CD8-positive, alpha-beta T cell (primary cell): ENCODE measurements at regions of chr2 and their contacts with region 1.

Region 1: GRCh38 chr2:30208452-30208851 is 22.9 kb upstream of the LBH start:
- DNase-seq: peak in 6 of 9 experiments; percentile 37 to 73 (median 55)
- ATAC-seq: peak; percentile 59
- H3K4me3 ChIP-seq: peak overlapping the region in 1 of 2 experiments; percentile 1
- H3K4me3 Mint-ChIP-seq: peak overlapping the region; percentile 59
- H3K27ac ChIP-seq: peak overlapping the region in 1 of 2 experiments; percentile 40
- H3K27ac Mint-ChIP-seq: peak overlapping the region; percentile 82
- H3K4me1 ChIP-seq: peaks cover 25% of the 10 kb centered on the region
- H3K4me1 Mint-ChIP-seq: peaks cover 26% of the 10 kb centered on the region
- H3K27me3 ChIP-seq: no peaks in the 10 kb centered on the region
- H3K27me3 Mint-ChIP-seq: no peaks in the 10 kb centered on the region
- CTCF ChIP-seq: peak; percentile 81

Region 2: DNA sequence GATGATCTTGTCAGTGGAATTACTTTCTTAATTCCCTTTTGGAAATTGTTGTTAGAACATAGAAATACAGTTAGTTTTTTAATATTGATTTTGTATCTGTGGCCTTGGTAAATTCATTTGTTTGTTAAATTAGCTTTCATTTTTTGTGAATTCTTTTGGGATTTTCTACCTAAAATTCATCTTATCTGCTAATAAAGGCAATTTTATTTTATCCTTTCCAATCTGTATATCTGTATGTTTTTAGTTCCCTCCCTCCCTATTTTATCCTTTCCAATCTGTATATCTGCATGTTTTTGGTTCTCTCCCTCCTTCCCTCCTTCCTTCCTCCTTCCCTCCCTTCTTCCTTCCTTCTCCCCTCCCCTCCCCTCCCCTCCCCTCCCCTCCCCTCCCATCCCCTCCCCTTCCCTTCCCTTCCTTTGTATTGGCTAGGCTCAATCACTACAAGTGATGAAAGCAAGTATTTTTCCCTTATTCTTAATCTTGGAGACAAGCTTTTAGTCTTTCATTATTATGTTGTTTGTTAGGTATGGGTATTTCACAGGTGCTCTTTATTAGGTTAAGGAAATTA is 531.5 kb before region 1 on chr2:
- CTCF ChIA-PET with region 1: no interaction called
- POLR2A ChIA-PET with region 1: no interaction called
- intact Hi-C with region 1: no loop called
- DNase-seq: no peak
- ATAC-seq: no peak
- H3K4me3 ChIP-seq: no peak overlapping the region
- H3K4me3 Mint-ChIP-seq: no peak overlapping the region
- H3K27ac ChIP-seq: no peak overlapping the region
- H3K27ac Mint-ChIP-seq: no peak overlapping the region
- H3K4me1 ChIP-seq: no peaks in the 10 kb centered on the region
- H3K4me1 Mint-ChIP-seq: no peaks in the 10 kb centered on the region
- H3K27me3 ChIP-seq: no peaks in the 10 kb centered on the region
- H3K27me3 Mint-ChIP-seq: peaks cover 16% of the 10 kb centered on the region
- CTCF ChIP-seq: no peak

Region 3: DNA sequence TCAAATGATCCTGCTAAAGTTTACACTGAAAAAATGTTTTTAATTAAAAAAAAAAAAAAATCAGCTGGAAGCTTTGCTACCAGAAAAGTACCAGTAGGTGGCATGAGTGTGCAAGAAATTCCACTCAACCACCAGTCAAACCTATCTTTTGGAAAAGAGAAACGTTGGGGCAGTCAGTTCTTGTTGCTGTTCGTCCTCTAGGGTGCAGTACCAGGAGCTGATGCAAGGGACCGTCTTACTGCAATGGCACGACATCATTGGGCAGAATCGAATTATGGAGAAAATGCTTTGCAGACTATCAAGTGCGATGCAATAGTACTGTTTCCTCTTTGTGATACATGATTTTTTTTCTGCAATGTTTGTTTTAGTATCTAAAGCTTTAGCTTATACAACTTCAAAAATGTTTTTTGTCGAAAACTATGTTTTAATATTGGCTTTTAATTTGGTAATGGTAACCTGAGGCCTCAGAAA is 43.4 kb before region 1 on chr2:
- CTCF ChIA-PET with region 1: interaction called, 87 read pairs
- POLR2A ChIA-PET with region 1: interaction called, 4 read pairs
- intact Hi-C with region 1: loop called in 1 of 2 experiments (anchors 2 kb)
- DNase-seq: peak in 8 of 9 experiments; percentile 28 to 90 (median 60)
- ATAC-seq: peak; percentile 83
- H3K4me3 ChIP-seq: no peak overlapping the region
- H3K4me3 Mint-ChIP-seq: no peak overlapping the region
- H3K27ac ChIP-seq: no peak overlapping the region
- H3K27ac Mint-ChIP-seq: no peak overlapping the region
- H3K4me1 ChIP-seq: no peaks in the 10 kb centered on the region
- H3K4me1 Mint-ChIP-seq: peaks cover 5% of the 10 kb centered on the region
- H3K27me3 ChIP-seq: no peaks in the 10 kb centered on the region
- H3K27me3 Mint-ChIP-seq: no peaks in the 10 kb centered on the region
- CTCF ChIP-seq: peak; percentile 93

Region 4: GRCh38 chr2:30239308-30239985 is 31.0 kb after region 1 on chr2:
- CTCF ChIA-PET with region 1: interaction called, 347 read pairs
- POLR2A ChIA-PET with region 1: interaction called, 76 read pairs
- intact Hi-C with region 1: no loop called
- DNase-seq: peak; percentile 48 to 91 (median 79)
- ATAC-seq: peak; percentile 73
- H3K4me3 ChIP-seq: peak overlapping the region; percentile 11 to 39
- H3K4me3 Mint-ChIP-seq: peak overlapping the region; percentile 94
- H3K27ac ChIP-seq: peak overlapping the region; percentile 24 to 60
- H3K27ac Mint-ChIP-seq: peak overlapping the region; percentile 96
- H3K4me1 ChIP-seq: peaks cover 90% of the 10 kb centered on the region
- H3K4me1 Mint-ChIP-seq: peaks cover 88% of the 10 kb centered on the region
- H3K27me3 ChIP-seq: no peaks in the 10 kb centered on the region
- H3K27me3 Mint-ChIP-seq: no peaks in the 10 kb centered on the region
- CTCF ChIP-seq: peak; percentile 95

Region 5: DNA sequence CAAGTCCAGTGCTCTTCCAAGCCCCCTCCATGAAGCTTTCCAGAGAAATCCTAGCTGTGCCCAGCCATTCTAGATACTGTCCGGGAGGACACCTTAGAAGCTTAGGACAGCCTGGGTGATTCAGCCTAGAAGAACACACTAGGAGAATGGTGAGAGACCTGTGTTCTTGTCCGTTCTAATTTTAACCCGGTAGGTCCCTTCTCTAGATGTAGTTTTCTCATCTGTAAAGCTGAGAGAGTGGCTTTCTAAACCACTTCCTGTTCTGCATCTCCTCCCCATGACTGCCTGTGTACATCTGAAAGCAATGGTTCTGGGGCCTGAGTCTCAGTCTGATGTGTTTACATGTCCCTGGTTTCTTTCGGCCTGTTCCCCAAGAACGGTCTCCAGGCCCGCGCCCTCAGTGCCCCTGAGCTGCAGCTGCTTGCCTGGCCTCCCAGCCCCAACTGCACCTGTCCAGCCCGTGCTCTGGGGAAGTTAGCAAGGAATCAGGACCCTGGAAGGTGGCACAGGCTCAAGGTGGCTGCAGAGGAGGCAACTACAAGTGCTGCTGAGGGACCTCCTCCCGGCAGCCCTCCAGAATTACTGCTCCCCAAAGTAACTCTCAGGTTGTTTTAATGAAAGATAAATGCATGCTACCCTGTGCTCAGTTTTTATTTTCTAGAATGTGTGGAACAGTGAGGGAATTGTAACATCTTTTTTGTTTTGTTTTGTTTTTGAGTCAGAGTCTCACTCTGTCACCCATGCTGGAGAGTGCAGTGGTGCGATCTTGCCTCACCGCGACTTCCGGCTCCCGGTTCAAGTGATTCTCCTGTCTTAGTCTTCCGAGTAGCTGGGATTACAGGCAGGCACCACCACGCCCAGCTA is 128.8 kb after region 1 on chr2:
- CTCF ChIA-PET with region 1: interaction called, 17 read pairs
- POLR2A ChIA-PET with region 1: interaction called, 4 read pairs
- intact Hi-C with region 1: no loop called
- DNase-seq: peak in 8 of 9 experiments; percentile 30 to 84 (median 60)
- ATAC-seq: peak; percentile 80
- H3K4me3 ChIP-seq: peak overlapping the region; percentile 31 to 43
- H3K4me3 Mint-ChIP-seq: peak overlapping the region; percentile 80
- H3K27ac ChIP-seq: peak overlapping the region; percentile 65 to 89
- H3K27ac Mint-ChIP-seq: peak overlapping the region; percentile 98
- H3K4me1 ChIP-seq: peaks cover 68% of the 10 kb centered on the region
- H3K4me1 Mint-ChIP-seq: peaks cover 82% of the 10 kb centered on the region
- H3K27me3 ChIP-seq: no peaks in the 10 kb centered on the region
- H3K27me3 Mint-ChIP-seq: no peaks in the 10 kb centered on the region
- CTCF ChIP-seq: no peak

Region 6: GRCh38 chr2:30472326-30472725 is 263.9 kb after region 1 on chr2:
- CTCF ChIA-PET with region 1: interaction called, 59 read pairs
- POLR2A ChIA-PET with region 1: interaction called, 3 read pairs
- intact Hi-C with region 1: loop called (anchors 1 to 5 kb)
- DNase-seq: no peak
- ATAC-seq: no peak
- H3K4me3 ChIP-seq: no peak overlapping the region
- H3K4me3 Mint-ChIP-seq: no peak overlapping the region
- H3K27ac ChIP-seq: no peak overlapping the region
- H3K27ac Mint-ChIP-seq: no peak overlapping the region
- H3K4me1 ChIP-seq: peaks cover 14% of the 10 kb centered on the region
- H3K4me1 Mint-ChIP-seq: peaks cover 49% of the 10 kb centered on the region
- H3K27me3 ChIP-seq: no peaks in the 10 kb centered on the region
- H3K27me3 Mint-ChIP-seq: no peaks in the 10 kb centered on the region
- CTCF ChIP-seq: no peak